Activated CD4-positive, alpha-beta T cell treated with anti-CD3 and anti-CD28 coated beads for 36 hours (primary cell): ENCODE measurements at regions of chr13 and their contacts with region 1.

Region 1: GRCh38 chr13:29595380-29596063 is at the start of gene SLC7A1:
- DNase-seq: peak; percentile 92
- ATAC-seq: peak; percentile 88
- H3K4me3 Mint-ChIP-seq: peak within 1 kb of the TSS; percentile 90
- H3K27ac Mint-ChIP-seq: peak within 1 kb of the TSS; percentile 95
- H3K4me1 Mint-ChIP-seq: peaks cover 36% of the 10 kb centered on the region
- H3K27me3 Mint-ChIP-seq: no peaks in the 10 kb centered on the region
- total RNA-seq, gene SLC7A1: 91.1 to 126 TPM

Region 2: DNA sequence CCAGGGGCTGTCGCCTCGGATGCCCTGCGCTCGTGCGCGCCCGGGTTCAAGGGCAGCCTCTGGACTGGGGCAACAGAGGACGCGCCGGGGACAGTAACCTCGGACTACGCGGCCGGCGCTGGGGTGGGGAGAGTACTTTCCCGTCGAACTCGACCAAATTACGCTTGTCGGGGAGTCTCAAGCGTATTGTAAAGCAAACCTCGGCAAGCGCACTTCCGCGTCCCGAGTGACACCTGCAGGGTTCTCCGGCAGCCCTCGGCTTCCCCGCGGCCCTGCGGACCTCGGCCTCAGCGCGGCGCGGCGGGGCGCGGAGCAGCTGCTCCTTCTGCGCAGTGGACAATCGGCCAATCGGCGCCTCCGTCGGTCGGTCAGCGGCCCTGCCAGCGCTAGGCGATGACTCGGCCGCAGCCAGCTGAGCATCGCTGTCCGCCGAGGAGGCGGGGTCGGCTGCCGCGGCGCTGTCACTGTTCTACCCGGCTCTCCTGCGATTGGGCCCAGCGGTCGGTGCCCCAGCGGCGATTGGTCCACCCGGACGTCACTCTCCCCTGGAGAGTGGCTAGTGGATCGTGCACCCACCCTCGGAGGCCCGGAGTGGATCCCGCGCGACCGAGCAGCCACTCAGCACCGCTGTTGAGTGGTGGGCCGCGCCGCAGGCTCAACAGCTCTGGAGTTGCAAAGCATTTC is 876.8 kb before region 1 on chr13 and contains the start of gene SLC46A3:
- CTCF ChIA-PET with region 1: no interaction called
- POLR2A ChIA-PET with region 1: no interaction called
- intact Hi-C with region 1: loop called in 1 of 2 experiments (anchors 1 kb)
- DNase-seq: peak; percentile 97
- ATAC-seq: peak; percentile 100
- H3K4me3 Mint-ChIP-seq: peak within 1 kb of the TSS; percentile 84
- H3K27ac Mint-ChIP-seq: peak within 1 kb of the TSS; percentile 94
- H3K4me1 Mint-ChIP-seq: peaks cover 23% of the 10 kb centered on the region
- H3K27me3 Mint-ChIP-seq: no peaks in the 10 kb centered on the region
- total RNA-seq, gene SLC46A3: 2.8 to 3.2 TPM

Region 3: DNA sequence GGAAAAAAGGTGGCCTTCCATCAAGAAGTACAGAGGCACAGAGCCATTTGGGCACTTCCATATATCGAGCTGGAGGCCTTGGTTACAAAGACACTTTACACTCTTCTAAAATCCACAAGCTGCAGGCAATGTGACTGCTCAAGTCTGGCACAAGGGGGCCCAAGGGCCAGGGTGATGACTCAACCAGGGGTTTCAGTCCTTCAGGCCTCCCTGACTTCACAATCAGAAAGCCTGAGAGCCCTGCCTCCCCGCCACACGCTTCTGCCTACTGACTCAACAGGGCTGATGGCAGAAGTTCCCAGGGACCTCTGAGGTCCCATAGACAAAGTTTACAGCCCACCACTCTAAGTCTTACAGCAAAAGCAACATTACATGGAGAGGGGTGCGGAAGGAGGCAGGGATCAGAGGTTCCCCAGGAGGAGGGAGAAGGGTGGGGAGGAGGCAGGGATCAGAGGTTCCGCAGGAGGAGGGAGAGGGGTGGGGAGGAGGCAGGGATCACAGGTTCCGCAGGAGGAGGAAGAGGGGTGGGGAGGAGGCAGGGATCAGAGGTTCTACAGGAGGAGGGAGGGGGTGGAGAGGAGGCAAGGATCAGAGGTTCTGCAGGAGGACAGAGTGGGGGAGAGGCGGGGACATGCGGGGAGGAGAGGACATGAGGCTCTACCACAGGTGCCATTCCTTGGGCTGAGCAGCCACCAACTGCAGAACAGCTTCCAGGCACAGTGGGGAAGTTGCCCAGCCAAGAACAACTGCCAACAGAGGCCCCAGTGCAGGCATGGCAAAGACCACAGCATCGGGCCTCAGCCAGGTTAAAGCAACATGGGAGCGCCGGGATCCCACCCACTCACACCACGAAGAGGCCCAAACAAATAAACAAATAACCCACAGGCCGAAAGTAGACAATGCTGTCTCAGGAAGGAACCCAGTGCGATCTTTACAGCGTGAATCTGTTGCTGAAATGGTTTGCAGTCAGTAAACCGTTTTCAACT is 52.0 kb before region 1 on chr13:
- CTCF ChIA-PET with region 1: no interaction called
- POLR2A ChIA-PET with region 1: interaction called, 3 read pairs
- intact Hi-C with region 1: loop called (anchors 1 to 2 kb)
- DNase-seq: peak; percentile 85
- ATAC-seq: peak; percentile 98
- H3K4me3 Mint-ChIP-seq: no peak overlapping the region
- H3K27ac Mint-ChIP-seq: peak overlapping the region; percentile 66
- H3K4me1 Mint-ChIP-seq: peaks cover 52% of the 10 kb centered on the region
- H3K27me3 Mint-ChIP-seq: no peaks in the 10 kb centered on the region

Region 4: DNA sequence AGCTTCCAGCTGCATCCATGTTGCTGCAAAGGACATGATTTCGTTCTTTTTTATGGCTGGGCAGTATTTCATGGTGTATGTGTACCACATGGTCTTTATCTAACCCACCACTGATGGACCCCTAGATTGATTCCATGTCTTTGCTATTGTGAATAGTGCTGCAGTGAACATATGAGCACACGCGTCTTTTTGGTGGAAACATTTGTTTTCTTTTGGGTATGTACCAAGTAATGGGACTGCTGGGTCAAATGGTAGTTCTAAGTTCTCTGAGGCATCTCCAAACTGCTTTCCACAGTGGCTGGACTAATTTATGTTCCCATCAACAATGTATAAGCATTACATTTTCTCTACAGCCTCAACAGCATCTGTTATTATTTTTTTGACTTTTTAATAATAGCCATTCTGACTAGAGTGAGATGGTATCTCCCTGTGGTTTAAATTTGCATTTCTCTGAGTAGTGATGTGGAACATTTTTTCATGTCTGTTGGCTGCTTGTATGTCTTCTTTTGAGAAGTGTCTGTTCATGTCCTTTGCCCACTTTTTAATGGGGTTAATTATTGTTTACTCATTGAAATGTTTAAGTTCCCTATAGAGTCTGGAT is 820.0 kb after region 1 on chr13:
- CTCF ChIA-PET with region 1: no interaction called
- POLR2A ChIA-PET with region 1: no interaction called
- intact Hi-C with region 1: no loop called
- DNase-seq: no peak
- ATAC-seq: peak; percentile 39
- H3K4me3 Mint-ChIP-seq: no peak overlapping the region
- H3K27ac Mint-ChIP-seq: peak overlapping the region; percentile 21
- H3K4me1 Mint-ChIP-seq: peaks cover 18% of the 10 kb centered on the region
- H3K27me3 Mint-ChIP-seq: no peaks in the 10 kb centered on the region